ENCODE measurements at regions of chr7 and their contacts with region 1.

Region 1: DNA sequence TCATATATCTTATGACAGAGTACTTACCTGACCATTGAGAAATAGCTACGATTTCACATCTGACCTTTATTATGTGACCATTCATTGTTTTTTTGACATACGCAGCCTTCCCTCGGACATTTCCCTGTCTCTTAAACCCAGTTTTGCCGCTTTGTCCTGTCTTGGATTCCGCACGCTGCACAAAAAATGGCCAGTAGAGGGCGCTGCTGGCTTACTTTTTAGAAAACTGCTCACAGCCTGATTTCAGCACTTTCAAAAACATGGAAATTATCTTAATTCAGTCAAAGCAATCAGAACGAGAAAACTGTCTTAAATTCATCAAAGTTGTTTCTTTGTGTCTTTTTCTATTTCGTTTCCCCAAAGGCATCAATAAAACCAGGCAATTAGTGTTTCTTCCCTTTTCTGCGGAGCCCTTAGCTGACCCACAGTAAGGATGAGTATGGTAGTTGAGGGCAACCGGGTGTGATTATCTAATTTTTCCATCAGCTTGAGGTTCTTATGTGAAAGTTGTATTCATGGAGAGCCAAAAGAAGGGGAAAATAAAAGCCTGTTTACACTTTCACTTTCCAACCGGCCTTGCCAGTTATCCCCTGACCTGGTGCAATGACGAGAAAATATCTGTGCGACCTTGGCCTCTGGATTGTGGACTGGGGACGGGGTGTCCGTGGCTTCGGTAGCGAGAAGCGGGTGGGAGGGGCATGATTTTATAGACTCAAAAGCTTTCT is 144.4 kb downstream of the DYNC1I1 start:
- DNase-seq: peak; percentile 46
- ATAC-seq: peak; percentile 95
- H3K4me3 ChIP-seq: peak overlapping the region in 1 of 2 experiments; percentile 32; a peak in 2 of 4 replicates
- H3K27ac ChIP-seq: no peak overlapping the region
- H3K4me1 ChIP-seq: peaks cover 3% of the 10 kb centered on the region; the same call in 1 of the 2 replicates
- H3K27me3 ChIP-seq: peaks cover 4% of the 10 kb centered on the region
- CTCF ChIP-seq: peak; percentile 91

Region 2: DNA sequence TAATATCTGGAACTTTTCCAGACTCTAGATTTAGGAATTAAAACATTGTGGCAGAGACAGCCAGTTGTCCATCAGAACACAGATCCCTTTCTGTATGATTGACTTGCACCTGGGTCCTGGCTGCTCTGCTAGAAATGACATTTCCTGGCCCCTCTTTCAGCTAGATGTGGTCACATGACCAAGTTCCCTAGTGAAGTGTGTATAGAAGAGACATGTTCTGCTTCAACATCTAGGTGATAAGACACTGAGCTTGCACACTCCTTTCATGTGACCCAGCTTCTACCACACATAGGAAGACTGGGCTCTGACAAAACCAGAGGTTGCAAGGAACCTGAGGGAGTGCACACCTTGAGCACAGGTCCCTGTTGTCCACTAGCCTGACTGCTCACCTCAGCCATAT is 167.2 kb before region 1 on chr7:
- CTCF ChIA-PET with region 1: no interaction called
- POLR2A ChIA-PET with region 1: no interaction called
- in situ Hi-C with region 1: no loop called
- intact Hi-C with region 1: no loop called
- DNase-seq: no peak
- ATAC-seq: no peak
- H3K4me3 ChIP-seq: no peak overlapping the region
- H3K27ac ChIP-seq: no peak overlapping the region
- H3K4me1 ChIP-seq: no peaks in the 10 kb centered on the region
- H3K27me3 ChIP-seq: no peaks in the 10 kb centered on the region
- CTCF ChIP-seq: no peak

Region 3: GRCh38 chr7:95794917-95795515 is 121.7 kb before region 1 on chr7:
- CTCF ChIA-PET with region 1: no interaction called
- POLR2A ChIA-PET with region 1: no interaction called
- in situ Hi-C with region 1: no loop called
- intact Hi-C with region 1: no loop called
- DNase-seq: no peak
- ATAC-seq: no peak
- H3K4me3 ChIP-seq: no peak overlapping the region
- H3K27ac ChIP-seq: no peak overlapping the region
- H3K4me1 ChIP-seq: no peaks in the 10 kb centered on the region
- H3K27me3 ChIP-seq: no peaks in the 10 kb centered on the region
- CTCF ChIP-seq: peak; percentile 43

Region 4: DNA sequence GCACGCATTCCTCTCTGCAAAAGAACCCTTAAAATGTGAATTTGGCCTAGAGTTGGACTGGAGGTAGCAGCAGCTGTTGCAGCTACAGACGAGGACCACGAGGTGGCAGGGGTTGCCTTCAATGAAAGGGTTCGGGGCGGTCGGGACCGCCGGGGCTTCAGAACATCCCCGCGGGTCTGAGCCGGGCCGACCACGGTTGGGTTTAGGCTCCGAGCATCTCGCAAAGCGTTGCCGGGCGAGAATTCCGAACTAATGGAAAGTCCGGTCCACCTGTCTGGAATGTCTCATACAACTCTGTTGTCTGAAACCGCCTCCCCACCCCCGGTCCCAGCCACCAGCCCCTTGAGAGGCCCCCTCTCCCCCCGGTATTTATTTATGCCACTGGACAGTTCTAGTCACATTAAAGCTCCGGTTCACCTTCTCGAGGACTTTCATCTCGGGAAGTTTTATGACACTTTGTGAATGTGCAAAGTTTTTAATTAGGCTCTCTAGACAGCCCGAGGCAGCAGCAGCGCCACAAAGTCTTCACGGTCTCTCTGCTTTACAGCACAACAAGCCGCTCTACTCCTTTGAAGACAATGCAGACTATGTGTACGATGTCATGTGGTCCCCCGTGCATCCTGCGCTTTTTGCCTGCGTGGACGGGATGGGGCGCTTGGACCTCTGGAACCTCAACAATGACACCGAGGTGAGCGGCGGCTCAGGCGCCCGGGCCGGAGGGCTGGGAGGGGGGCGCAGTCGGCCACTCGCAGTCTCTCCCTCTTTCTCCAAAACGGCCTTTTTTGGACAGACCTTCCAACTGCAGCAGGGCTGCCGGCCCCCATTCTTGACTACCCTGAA is 159.0 kb after region 1 on chr7:
- CTCF ChIA-PET with region 1: no interaction called
- POLR2A ChIA-PET with region 1: no interaction called
- in situ Hi-C with region 1: no loop called
- intact Hi-C with region 1: loop called (anchors 10 kb)
- DNase-seq: no peak
- ATAC-seq: peak; percentile 98
- H3K4me3 ChIP-seq: peak overlapping the region; percentile 47 to 65
- H3K27ac ChIP-seq: no peak overlapping the region
- H3K4me1 ChIP-seq: no peaks in the 10 kb centered on the region
- H3K27me3 ChIP-seq: peaks cover 12% of the 10 kb centered on the region; the same call in 1 of the 2 replicates
- CTCF ChIP-seq: peak; percentile 92

Region 5: DNA sequence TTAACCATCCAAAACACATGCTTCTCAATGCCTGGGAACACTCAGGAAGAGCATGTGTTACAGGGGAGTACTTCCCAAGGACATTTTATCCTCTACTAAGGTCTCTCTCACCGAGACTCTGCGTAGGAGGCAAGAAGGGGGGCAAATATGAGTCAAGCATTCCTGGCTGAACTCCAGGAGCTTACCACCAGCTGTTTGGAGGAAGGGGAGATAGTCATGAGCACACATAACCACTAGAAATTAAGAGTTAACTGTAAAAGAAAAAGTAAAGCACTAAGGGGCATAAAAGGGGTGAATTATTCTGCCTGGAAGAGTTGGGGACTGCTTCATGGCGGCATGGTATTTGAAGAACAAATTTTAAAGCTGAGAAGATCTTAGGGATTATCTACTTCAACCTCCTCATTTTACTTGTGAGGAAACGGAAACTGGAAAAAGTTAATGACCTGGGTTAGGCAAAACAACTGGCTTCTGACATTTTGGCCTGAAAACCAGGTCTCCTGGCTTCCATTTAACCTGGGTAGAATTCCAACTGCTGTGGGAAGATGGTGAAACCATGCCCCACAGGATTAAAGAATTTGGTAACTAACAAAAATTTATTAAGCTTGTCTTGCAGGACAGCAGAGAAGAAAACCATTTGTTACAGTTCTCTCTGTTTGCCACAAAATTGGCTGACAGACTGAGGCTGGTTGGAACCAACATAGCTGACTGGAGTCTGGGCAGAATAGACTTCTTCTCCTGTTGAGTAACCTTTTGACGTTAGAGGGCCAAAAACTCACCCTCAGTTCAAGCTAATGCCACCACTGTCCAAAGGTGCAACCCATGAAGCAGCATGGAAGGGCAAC is 319.7 kb after region 1 on chr7:
- CTCF ChIA-PET with region 1: no interaction called
- POLR2A ChIA-PET with region 1: no interaction called
- in situ Hi-C with region 1: no loop called
- intact Hi-C with region 1: no loop called
- DNase-seq: no peak
- ATAC-seq: no peak
- H3K4me3 ChIP-seq: no peak overlapping the region
- H3K27ac ChIP-seq: no peak overlapping the region
- H3K4me1 ChIP-seq: no peaks in the 10 kb centered on the region
- H3K27me3 ChIP-seq: no peaks in the 10 kb centered on the region
- CTCF ChIP-seq: no peak

Region 6: GRCh38 chr7:97027427-97028234 is 1110.9 kb after region 1 on chr7:
- CTCF ChIA-PET with region 1: interaction called, 3 read pairs
- POLR2A ChIA-PET with region 1: no interaction called
- in situ Hi-C with region 1: no loop called
- intact Hi-C with region 1: loop called (anchors 2 kb)
- DNase-seq: peak; percentile 67
- ATAC-seq: peak; percentile 93
- H3K4me3 ChIP-seq: peak overlapping the region; percentile 13 to 43; a peak in 3 of 4 replicates
- H3K27ac ChIP-seq: no peak overlapping the region
- H3K4me1 ChIP-seq: no peaks in the 10 kb centered on the region
- H3K27me3 ChIP-seq: no peaks in the 10 kb centered on the region; the same call in none of the 2 replicates
- CTCF ChIP-seq: peak; percentile 88

Region 7: GRCh38 chr7:97064967-97065587 is 1148.3 kb after region 1 on chr7:
- CTCF ChIA-PET with region 1: no interaction called
- POLR2A ChIA-PET with region 1: no interaction called
- in situ Hi-C with region 1: no loop called
- intact Hi-C with region 1: loop called (anchors 2 kb)
- DNase-seq: peak; percentile 38
- ATAC-seq: peak; percentile 96
- H3K4me3 ChIP-seq: no peak overlapping the region
- H3K27ac ChIP-seq: no peak overlapping the region
- H3K4me1 ChIP-seq: no peaks in the 10 kb centered on the region
- H3K27me3 ChIP-seq: no peaks in the 10 kb centered on the region
- CTCF ChIP-seq: peak; percentile 81

Region 8: DNA sequence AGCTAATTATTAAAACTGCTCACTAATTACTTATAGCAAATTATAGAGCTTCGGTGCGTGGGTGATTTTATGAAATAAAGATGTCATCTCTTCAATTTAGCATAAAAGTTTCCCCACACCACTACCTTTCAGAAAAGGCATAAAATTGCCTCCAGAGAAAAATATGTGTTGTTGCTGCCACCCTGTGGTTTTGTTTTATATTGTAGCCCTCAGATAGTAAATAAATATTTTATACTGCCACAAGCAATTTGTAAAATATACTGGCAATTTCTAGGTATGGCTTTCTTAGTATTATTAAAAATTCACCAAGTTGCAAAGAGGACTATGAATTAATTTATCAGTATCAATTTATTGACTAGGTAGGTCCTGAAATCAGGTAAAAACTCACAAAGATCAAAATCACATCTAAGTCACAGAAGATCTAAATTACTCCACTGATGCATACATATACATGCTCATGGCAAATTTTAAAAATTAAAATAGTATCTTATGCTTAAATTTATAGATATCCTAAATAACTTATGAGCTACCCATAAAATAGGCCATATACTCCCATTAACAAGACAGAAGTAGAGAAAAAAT is 1929.0 kb after region 1 on chr7:
- CTCF ChIA-PET with region 1: no interaction called
- POLR2A ChIA-PET with region 1: no interaction called
- in situ Hi-C with region 1: no loop called
- intact Hi-C with region 1: loop called (anchors 10 kb)
- DNase-seq: peak; percentile 25
- ATAC-seq: no peak
- H3K4me3 ChIP-seq: no peak overlapping the region
- H3K27ac ChIP-seq: no peak overlapping the region
- H3K4me1 ChIP-seq: no peaks in the 10 kb centered on the region
- H3K27me3 ChIP-seq: no peaks in the 10 kb centered on the region
- CTCF ChIP-seq: peak; percentile 59; the same call in 1 of the 2 replicates

Measured in Panc1 (cell line).